Mammary epithelial cell (primary cell): ENCODE measurements at regions of chr19 and their contacts with region 1.

Region 1: GRCh38 chr19:49676690-49677231 is 310 bp upstream of the PRMT1 start:
- DNase-seq: peak; percentile 100
- H3K4me3 ChIP-seq: peak overlapping the region; percentile 84 to 100 (median 91)
- H3K27ac ChIP-seq: peak overlapping the region; percentile 92
- H3K4me1 ChIP-seq: peaks cover 25% of the 10 kb centered on the region
- H3K27me3 ChIP-seq: no peaks in the 10 kb centered on the region
- CTCF ChIP-seq: no peak

Region 2: GRCh38 chr19:49502866-49503581 is 173.7 kb before region 1 on chr19:
- CTCF ChIA-PET with region 1: no interaction called
- dilution Hi-C with region 1: no loop called
- in situ Hi-C with region 1: loop called in 1 of 2 experiments (anchors 5 kb)
- intact Hi-C with region 1: loop called (anchors 1 kb)
- DNase-seq: peak; percentile 48
- H3K4me3 ChIP-seq: no peak overlapping the region
- H3K27ac ChIP-seq: no peak overlapping the region
- H3K4me1 ChIP-seq: peaks cover 4% of the 10 kb centered on the region
- H3K27me3 ChIP-seq: no peaks in the 10 kb centered on the region
- CTCF ChIP-seq: peak; percentile 30 to 59

Region 3: DNA sequence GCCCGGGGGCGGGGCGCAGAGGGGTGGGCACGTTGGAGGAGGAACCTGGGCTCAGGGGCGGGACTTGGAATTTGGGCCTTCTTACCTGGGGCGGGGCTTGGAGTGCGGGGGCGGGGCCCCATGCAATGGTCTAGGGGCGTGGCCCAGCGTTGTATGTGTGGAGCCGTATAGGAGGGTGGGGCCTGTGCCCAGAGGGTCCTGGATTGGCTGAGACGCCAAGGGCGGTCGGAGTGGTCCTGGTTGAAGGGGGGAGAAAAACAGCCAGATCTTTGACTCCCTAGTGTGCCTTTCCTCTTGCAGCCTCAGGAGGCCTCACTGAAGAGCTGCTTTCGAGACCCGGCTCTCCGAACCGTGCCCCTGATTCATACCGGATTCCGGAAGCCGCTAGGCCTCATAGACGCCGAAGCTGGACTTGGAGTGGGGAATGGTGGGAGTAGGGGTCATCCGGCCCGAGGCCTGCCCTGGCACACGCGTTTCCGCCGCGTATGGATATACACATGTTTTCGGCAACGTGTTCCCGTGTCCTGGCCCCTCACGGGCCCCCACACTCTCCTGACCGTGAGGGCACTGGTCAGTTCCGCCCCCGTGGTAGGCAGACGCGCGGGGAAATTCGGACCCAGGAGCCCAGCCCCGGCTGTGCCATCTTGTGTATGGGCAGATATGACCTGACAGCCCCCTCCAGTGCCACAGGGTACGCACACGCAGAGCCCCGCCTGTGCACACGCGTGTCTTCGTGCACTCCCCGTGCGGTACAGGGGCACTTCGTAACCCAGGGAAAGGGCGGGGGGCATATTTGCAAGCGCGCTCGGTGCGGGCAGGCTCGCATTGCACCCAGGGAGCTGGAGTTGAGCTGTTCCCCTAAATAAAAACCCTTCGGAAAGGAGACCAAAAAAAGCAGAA is 86.4 kb before region 1 on chr19:
- CTCF ChIA-PET with region 1: no interaction called
- dilution Hi-C with region 1: no loop called
- in situ Hi-C with region 1: no loop called
- intact Hi-C with region 1: loop called (anchors 2 kb)
- DNase-seq: peak; percentile 93
- H3K4me3 ChIP-seq: peak overlapping the region; percentile 42 to 78 (median 60)
- H3K27ac ChIP-seq: peak overlapping the region; percentile 63
- H3K4me1 ChIP-seq: peaks cover 13% of the 10 kb centered on the region
- H3K27me3 ChIP-seq: no peaks in the 10 kb centered on the region
- CTCF ChIP-seq: no peak

Region 4: DNA sequence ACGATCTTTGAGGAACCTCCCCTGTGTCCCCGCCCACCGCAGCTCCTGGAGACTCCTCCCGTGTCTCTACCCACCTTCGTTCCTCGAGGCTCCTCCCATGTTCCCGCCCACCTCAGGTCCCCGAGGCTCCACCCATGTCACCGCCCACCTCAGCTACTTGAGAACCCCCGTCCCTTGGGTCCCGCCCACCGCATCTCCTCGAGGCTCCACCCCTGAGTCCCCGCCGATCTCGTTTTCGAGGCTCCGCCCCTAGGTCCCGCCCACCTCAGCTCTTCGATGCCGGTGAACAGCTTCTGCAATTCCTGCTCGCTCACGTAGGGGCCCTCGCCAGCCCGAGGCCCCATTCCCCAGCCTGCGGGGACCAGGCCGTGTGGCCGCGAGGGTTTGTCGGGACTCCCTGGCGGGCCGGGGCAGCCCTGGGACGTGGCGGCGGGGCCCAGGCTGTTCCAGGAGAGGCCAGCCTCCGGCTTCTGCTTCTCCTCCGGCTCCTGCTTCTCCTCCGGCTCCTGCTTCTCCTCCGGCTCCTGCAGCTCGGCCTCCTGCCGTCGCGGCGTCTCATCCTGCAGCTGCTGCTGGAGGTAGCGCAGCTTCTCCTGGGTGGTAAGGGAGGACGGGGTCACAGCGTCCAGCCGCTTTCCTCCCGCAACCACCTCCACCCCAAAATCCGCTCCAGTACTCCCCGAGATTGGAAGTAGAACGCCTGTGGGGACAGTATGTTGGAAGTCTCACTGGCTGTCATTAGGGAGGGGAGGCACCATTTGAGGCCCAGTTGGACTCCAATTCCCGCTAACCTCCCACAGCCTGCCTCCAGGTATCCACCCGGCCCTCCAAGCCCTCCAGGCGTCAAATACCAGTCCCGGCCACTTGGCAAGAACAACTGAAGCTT is 69.7 kb after region 1 on chr19:
- CTCF ChIA-PET with region 1: no interaction called
- dilution Hi-C with region 1: loop called (anchors 5 kb)
- in situ Hi-C with region 1: no loop called
- intact Hi-C with region 1: no loop called
- DNase-seq: no peak
- H3K4me3 ChIP-seq: no peak overlapping the region
- H3K27ac ChIP-seq: no peak overlapping the region
- H3K4me1 ChIP-seq: no peaks in the 10 kb centered on the region
- H3K27me3 ChIP-seq: no peaks in the 10 kb centered on the region
- CTCF ChIP-seq: no peak

Region 5: GRCh38 chr19:49877020-49877878 is 200.5 kb after region 1 on chr19 and contains the starts of genes AKT1S1 and TBC1D17:
- CTCF ChIA-PET with region 1: no interaction called
- dilution Hi-C with region 1: no loop called
- in situ Hi-C with region 1: no loop called
- intact Hi-C with region 1: loop called (anchors 2 kb)
- DNase-seq: peak; percentile 100
- H3K4me3 ChIP-seq: peak within 1 kb of the TSS; percentile 86 to 98 (median 92)
- H3K27ac ChIP-seq: peak within 1 kb of the TSS; percentile 98
- H3K4me1 ChIP-seq: peaks cover 24% of the 10 kb centered on the region
- H3K27me3 ChIP-seq: no peaks in the 10 kb centered on the region
- CTCF ChIP-seq: no peak
- total RNA-seq, gene AKT1S1: 12.3 to 68.3 TPM
- total RNA-seq, gene TBC1D17: 13.0 to 32.0 TPM